Left colon (tissue), 2 donors: ENCODE measurements at regions of chr4 and their contacts with region 1.

Region 1: DNA sequence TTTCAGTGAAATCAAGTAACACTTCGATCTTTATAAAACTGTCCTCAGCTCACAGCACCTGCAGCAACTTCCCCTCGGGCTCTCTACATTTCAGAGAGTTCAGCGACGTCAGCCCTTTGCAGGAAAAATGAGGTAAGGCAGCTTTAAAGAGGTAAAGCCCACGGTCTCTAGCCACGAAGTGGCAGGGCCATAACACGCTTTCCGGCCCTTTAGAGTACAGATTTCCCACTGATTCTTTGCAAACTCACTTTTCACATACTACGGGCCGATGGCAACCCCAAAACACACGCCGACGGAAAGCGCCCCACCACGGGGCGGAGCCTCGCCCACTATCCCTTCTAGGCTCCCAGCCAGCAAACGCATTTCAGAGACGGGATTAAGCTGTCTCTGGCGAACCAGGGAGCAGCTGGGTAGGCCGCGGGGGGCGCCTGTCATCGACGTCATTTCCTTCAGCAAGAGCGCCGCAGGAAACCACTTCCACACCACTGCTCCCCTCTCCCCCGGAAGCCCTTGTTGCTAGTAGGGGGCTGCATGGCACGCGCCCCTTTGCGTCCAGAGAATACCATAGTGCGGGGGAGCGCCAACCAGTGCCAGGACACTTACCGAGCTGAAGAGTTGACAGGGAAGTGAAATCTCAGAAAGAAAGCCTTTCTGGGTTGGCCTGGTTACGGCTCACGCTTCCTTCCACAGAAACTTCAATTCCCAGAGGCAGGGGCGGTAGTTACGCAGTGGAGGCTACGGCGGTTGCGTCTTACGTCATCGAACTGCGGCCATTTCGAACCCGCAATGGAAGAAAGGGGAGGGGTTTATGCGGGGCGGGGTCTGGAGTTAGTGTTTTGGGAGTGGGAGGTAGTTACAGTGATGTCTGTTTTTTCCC is at the start of gene TRMT10A:
- DNase-seq: peak; percentile 99
- ATAC-seq: peak; percentile 96
- total RNA-seq, gene TRMT10A: 6.5 to 7.1 TPM

Region 2: GRCh38 chr4:99462875-99463464 is 100.6 kb before region 1 on chr4:
- intact Hi-C with region 1: no loop called
- DNase-seq: peak; percentile 32 to 47
- ATAC-seq: peak; percentile 99

Region 3: DNA sequence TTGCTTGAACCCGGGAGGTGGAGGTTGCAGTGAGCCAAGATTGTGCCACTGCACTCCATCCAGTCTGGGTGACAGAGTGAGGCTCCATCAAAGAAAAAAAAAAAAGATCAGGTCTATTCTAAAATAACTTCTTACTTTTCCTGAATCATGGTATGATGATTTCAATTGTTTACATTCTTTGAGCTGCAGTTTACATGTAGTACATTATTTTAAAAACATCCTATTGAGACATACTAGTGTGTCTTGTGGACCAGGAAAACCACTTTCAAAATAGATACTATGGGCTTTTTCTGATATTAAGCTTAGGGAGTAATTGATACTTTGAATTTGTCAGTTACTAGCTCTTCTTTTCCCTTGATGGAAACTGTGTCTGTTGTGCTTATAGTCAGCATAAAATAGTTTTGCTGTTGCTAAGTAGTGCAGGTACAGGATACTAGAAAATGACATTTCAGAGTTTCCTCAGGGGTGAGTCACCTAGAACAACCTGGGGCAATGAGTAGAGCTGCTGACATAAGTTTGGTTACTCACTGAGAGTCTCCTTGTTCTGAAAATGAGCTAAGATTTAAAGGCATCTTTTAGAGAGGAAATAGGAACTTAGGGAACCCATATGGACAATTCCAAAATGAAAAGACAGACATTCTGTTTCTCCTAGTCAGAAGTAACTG is 147.3 kb after region 1 on chr4:
- intact Hi-C with region 1: no loop called
- DNase-seq: no peak
- ATAC-seq: no peak

Region 4: DNA sequence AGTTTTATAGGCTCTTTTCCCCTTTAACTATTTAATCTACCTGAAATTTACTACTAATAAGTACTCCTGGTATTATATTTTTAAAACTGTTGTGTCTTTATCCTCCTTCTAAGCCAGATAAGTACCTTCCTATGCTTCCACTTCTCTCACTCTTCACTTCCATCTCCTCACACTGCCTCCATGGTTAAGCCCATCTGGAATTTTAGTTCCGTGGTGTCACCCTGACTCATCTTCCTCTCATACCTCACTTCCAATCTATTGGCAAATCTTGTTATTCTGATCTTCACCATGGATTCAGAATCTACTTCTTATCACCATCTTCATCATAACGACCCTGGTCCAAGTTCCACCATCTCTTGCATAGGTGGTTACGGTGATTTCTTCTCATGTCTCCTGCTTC is 220.4 kb after region 1 on chr4:
- intact Hi-C with region 1: no loop called
- DNase-seq: no peak
- ATAC-seq: no peak

Region 5: DNA sequence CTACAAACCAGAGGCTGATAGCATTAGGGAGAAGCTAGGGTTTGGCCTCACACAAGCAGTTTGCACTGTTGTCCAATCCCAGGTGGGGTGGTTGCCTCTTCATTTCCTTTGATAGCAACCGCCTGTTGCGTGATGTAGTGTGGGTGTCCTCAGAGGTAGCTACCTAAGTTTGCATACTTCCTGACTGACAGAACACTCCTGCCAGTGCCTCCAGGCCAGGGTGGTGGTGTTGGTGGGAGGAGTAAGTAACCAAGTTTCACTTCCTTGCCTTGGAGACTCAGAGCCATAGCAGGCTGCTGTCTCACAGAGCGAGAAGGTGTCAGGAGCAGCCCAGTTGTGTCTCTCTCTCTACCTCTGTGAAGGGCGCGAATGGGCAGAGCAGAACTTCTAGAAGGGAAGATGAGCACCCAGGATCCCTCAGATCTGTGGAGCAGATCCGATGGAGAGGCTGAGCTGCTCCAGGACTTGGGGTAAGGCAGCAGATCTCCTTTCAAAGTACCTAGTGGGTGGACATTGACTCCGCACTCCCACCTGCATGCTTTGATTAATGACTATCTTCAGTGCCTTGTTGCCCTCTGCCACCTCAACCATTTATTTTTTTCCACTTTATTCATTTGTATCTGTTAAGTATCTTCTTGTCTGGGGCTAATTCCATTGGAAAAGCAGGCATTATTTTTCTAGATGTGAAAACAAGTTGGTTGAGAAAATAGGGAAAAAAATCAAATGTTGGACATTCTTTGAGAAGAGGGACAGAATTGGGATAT is 253.2 kb after region 1 on chr4 and contains the start of gene DAPP1:
- intact Hi-C with region 1: loop called in 1 of 2 experiments (anchors 10 kb)
- DNase-seq: peak; percentile 61 to 79
- ATAC-seq: peak; percentile 48
- total RNA-seq, gene DAPP1: 2.0 to 3.4 TPM

Region 6: DNA sequence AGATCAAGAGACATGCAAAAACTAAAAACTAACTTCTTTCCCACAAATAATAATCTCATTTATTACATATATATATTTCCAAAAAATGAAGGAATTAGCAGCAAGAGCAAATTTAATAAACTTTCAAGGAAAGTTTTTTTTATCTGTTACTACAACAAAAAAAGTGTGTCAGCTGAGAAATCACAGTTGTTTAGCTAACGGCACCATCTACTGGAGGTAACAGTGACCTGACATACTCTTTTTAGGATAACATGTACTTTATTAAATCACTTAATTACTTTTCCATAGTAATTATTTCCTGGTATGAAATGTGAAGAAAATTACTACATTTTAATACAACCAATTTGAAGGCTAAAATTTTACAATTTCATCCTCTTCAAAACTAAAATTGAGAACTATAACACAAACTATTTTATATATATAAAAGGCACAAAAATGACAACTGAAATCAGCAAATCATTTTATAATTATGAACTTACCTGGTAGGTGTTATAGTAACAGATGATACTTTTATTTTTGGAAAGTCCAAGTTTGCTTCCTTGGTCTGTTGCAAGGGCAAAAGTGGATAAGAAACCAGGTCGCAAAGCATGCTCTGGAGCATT is 321.6 kb after region 1 on chr4:
- intact Hi-C with region 1: loop called in 1 of 2 experiments (anchors 5 kb)
- DNase-seq: no peak
- ATAC-seq: no peak

Region 7: DNA sequence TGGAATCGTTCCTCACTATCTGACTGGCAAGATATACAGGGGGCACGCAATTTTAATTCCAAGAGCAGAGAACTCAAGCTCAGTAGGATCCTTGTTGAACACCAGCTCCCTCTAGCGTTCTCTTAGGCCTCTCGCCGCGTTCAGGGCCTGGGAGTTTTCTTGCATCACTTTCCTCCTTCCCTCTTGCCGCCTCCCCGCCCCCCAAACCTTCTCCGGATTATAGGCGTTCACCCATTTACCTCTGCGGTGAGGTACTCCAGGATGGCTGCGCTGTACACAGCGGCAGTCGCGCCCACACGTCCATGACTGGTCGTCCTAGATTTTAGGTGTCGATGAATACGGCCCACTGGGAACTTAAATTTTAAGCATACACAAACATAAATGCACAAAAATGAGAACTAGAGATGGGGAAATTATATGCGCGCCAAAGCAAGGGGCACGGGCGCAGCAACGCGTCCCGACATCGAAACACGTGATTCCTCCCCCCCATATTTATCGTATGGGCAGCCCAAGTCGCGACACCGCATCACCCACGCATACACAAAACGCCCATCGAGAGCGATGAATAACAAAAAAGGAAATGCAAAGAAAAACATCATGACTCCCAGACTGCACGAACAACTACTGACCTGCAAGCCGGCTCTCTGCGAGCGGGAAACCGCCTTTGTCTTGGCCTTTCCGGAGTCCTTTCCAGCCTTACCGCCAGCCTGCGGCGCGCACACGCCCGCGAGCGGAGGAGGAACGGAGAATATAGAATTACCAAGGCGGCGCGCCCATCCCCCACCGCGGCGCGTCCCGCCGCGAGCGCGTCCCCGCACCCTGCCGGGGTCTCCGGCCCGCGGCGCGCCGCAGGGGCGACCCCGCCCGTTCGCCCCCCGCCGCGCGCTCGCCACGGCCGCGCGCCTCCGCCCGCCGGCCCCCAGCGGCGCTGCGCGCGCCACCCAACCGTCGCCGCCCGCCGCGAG is 385.8 kb after region 1 on chr4:
- intact Hi-C with region 1: loop called in 1 of 2 experiments (anchors 5 kb)
- DNase-seq: peak; percentile 92 to 95
- ATAC-seq: peak; percentile 44